ENCODE measurements at regions of chr11 and their contacts with region 1.

Region 1: GRCh38 chr11:105183426-105183825 is 43.9 kb upstream of the CARD18 start:
- DNase-seq: no peak
- ATAC-seq: no peak
- H3K4me3 Mint-ChIP-seq: no peak overlapping the region
- H3K27ac Mint-ChIP-seq: no peak overlapping the region
- H3K4me1 Mint-ChIP-seq: no peaks in the 10 kb centered on the region
- H3K27me3 Mint-ChIP-seq: peaks cover under 1% of the 10 kb centered on the region
- CTCF ChIP-seq: no peak

Region 2: DNA sequence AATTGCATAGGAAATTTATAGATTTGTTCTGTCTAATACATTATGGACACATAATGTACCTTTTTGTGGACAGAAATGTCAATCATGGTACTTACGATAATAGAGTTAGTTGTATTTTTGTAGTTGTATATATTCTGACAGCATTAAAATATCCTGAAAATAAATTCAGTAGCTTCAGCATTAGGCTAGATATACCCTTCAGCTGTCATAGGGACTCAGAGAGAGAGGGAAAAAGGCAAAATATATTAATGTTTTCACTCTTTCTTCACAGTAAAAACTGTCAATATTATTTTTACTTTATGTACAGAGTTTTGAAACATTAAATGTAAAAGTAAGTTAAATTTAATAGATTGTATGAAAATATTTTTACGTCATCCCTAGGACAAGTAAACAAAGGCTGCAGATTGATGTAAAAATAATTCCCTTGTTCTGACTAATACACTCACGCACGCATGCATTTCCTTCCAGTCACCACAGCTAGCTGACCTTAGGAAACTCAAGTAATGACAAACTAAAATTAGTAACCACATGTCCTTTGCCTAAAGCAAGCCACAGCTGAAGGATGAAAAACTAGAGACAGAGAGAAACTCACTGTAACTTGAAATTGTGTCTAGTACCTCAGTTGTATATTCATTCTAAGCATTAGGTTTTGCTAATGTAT is 60.9 kb after region 1 on chr11:
- CTCF ChIA-PET with region 1: no interaction called
- POLR2A ChIA-PET with region 1: no interaction called
- intact Hi-C with region 1: loop called (anchors 2 kb)
- DNase-seq: no peak
- ATAC-seq: no peak
- H3K4me3 Mint-ChIP-seq: no peak overlapping the region
- H3K27ac Mint-ChIP-seq: no peak overlapping the region
- H3K4me1 Mint-ChIP-seq: no peaks in the 10 kb centered on the region
- H3K27me3 Mint-ChIP-seq: no peaks in the 10 kb centered on the region
- CTCF ChIP-seq: no peak

Measured in activated B cell treated with CpG ODN at 0.5 μM for 24 hours (primary cell).